ENCODE measurements at regions of chr11 and their contacts with region 1.

Region 1: GRCh38 chr11:38824573-38824972 is 2226.5 kb upstream of the RAG2 start:
- DNase-seq: no peak
- H3K4me3 ChIP-seq: no peak overlapping the region
- H3K27ac ChIP-seq: no peak overlapping the region
- H3K4me1 ChIP-seq: no peaks in the 10 kb centered on the region
- H3K27me3 ChIP-seq: no peaks in the 10 kb centered on the region
- CTCF ChIP-seq: no peak
- POLR2A ChIP-seq: no peak

Region 2: DNA sequence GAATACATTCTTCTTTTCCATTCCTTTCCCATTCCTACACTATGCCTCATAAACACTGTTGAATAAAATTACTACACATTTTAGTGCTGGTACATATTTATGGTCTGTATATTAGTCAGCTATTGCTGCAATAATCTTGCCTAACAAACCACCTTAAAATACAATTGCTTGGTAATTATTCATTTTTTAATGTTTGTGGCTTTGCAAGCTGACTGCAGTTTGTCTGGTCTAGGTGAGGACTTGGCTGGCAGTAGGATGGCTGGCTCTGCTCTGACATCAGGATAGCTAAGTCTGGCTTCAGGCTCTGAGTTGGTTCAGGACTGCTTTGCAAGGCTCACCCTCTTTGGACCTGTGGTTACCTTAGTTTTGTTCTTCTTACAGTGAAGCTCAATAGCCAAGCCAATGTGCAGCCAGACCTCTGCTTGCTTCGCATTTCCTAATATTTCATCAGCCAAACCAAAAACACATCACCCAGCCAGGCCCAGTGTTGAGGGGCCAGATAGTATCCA is 1313.1 kb before region 1 on chr11:
- intact Hi-C with region 1: loop called (anchors 10 kb)
- DNase-seq: no peak
- H3K4me3 ChIP-seq: no peak overlapping the region
- H3K27ac ChIP-seq: no peak overlapping the region
- H3K4me1 ChIP-seq: no peaks in the 10 kb centered on the region
- H3K27me3 ChIP-seq: no peaks in the 10 kb centered on the region
- CTCF ChIP-seq: no peak
- POLR2A ChIP-seq: no peak

Region 3: DNA sequence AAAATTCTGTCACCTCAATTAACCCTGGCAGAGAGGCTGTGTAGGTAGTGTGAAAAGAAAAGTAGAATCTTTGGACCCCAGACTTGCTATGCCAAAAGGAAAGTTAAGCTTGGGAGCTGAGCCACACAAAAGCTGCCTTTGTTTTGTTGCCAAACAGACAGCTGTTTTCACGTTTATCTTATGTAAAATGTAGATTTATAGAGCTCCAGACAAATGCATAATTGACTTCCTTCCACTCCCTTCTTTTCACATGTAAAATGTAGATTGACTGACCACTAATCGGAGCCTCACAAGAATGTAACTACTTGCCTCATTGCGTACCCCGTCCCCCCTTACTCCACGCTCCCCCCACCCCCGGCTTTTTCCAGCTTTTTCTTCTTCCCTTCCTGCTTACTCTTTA is 75.6 kb after region 1 on chr11:
- intact Hi-C with region 1: loop called (anchors 2 kb)
- DNase-seq: no peak
- H3K4me3 ChIP-seq: no peak overlapping the region
- H3K27ac ChIP-seq: no peak overlapping the region
- H3K4me1 ChIP-seq: no peaks in the 10 kb centered on the region
- H3K27me3 ChIP-seq: no peaks in the 10 kb centered on the region
- CTCF ChIP-seq: no peak
- POLR2A ChIP-seq: no peak